RWPE1 (cell line): ENCODE measurements at regions of chr11 and their contacts with region 1.

Region 1: GRCh38 chr11:64489831-64490441 is 101.1 kb upstream of the SLC22A12 start:
- DNase-seq: peak; percentile 72
- H3K27ac ChIP-seq: no peak overlapping the region
- CTCF ChIP-seq: peak; percentile 78

Region 2: GRCh38 chr11:63970902-63971301 is 519.0 kb before region 1 on chr11:
- CTCF ChIA-PET with region 1: no interaction called
- POLR2A ChIA-PET with region 1: no interaction called
- DNase-seq: no peak
- H3K27ac ChIP-seq: no peak overlapping the region; the same call in 1 of the 2 replicates
- CTCF ChIP-seq: no peak

Region 3: GRCh38 chr11:64652586-64653387 is 162.9 kb after region 1 on chr11:
- CTCF ChIA-PET with region 1: interaction called, 26 read pairs
- POLR2A ChIA-PET with region 1: no interaction called
- DNase-seq: peak; percentile 89
- H3K27ac ChIP-seq: no peak overlapping the region
- CTCF ChIP-seq: peak; percentile 86